Posterior vena cava (tissue), 2 donors: ENCODE measurements at regions of chr2 and their contacts with region 1.

Region 1: GRCh38 chr2:202400941-202401340 is 24.8 kb downstream of the BMPR2 start:
- DNase-seq: no peak

Region 2: GRCh38 chr2:201024518-201024917 is 1376.4 kb before region 1 on chr2:
- intact Hi-C with region 1: no loop called
- DNase-seq: no peak

Region 3: GRCh38 chr2:203759690-203760365 is 1358.9 kb after region 1 on chr2:
- intact Hi-C with region 1: loop called in 1 of 2 experiments (anchors 5 kb)
- DNase-seq: no peak